ENCODE measurements at regions of chr2 and their contacts with region 1.

Region 1: GRCh38 chr2:49490710-49491109 is 336.4 kb upstream of the FSHR start:
- DNase-seq: peak; percentile 50
- H3K4me3 ChIP-seq: no peak overlapping the region
- H3K27ac ChIP-seq: no peak overlapping the region
- H3K4me1 ChIP-seq: no peaks in the 10 kb centered on the region
- H3K27me3 ChIP-seq: no peaks in the 10 kb centered on the region
- CTCF ChIP-seq: peak; percentile 28 to 55 (median 46)
- EP300 ChIP-seq: no peak
- POLR2A ChIP-seq: no peak

Region 2: GRCh38 chr2:49465157-49465831 is 25.4 kb before region 1 on chr2:
- in situ Hi-C with region 1: no loop called
- intact Hi-C with region 1: loop called (anchors 1 kb)
- DNase-seq: no peak
- H3K4me3 ChIP-seq: no peak overlapping the region
- H3K27ac ChIP-seq: no peak overlapping the region
- H3K4me1 ChIP-seq: no peaks in the 10 kb centered on the region
- H3K27me3 ChIP-seq: no peaks in the 10 kb centered on the region
- CTCF ChIP-seq: no peak
- EP300 ChIP-seq: no peak
- POLR2A ChIP-seq: no peak

Region 3: DNA sequence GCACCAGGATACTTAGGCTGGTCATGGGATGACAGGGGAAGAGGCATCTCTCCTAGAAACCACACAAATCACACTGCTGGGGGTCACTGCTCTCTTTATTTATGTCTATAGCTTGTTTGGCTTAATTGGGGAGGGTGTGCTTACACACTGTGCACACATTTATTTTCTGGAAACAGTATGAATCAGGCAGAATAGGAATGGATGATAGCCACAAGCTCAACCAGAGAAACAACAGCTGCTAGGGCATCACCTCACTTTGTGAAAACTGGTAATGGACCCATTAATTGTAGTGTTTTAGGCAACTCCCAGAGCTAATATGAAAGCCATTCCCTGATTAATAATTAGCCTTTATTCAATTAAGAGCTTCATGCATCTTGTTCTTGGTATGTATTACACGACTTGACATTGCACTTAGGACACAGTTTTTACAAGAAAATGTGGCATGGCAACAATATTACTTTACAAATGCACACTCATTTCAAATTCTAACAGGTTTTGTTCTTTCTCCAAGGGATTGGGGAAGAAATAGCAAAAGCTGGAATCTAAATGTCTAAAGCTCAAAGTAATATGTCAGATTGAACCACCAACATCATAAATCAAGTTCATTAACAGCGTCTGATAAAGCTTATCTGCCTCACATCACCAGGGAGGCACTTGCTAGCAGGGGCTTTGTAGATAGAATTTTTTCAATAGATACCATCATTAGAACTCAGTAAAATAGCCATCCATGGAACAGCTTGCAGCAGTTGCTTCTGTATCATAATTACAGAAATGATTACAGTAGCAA is 25.5 kb after region 1 on chr2:
- in situ Hi-C with region 1: no loop called
- intact Hi-C with region 1: loop called (anchors 2 kb)
- DNase-seq: no peak
- H3K4me3 ChIP-seq: no peak overlapping the region
- H3K27ac ChIP-seq: no peak overlapping the region
- H3K4me1 ChIP-seq: no peaks in the 10 kb centered on the region
- H3K27me3 ChIP-seq: no peaks in the 10 kb centered on the region
- CTCF ChIP-seq: no peak
- EP300 ChIP-seq: no peak
- POLR2A ChIP-seq: no peak

Region 4: GRCh38 chr2:50049267-50049666 is 558.6 kb after region 1 on chr2:
- in situ Hi-C with region 1: no loop called
- intact Hi-C with region 1: no loop called
- DNase-seq: no peak
- H3K4me3 ChIP-seq: no peak overlapping the region
- H3K27ac ChIP-seq: no peak overlapping the region
- H3K4me1 ChIP-seq: no peaks in the 10 kb centered on the region
- H3K27me3 ChIP-seq: no peaks in the 10 kb centered on the region
- CTCF ChIP-seq: no peak
- EP300 ChIP-seq: no peak
- POLR2A ChIP-seq: no peak